MCF 10A (cell line): ENCODE measurements at regions of chr5 and their contacts with region 1.

Region 1: DNA sequence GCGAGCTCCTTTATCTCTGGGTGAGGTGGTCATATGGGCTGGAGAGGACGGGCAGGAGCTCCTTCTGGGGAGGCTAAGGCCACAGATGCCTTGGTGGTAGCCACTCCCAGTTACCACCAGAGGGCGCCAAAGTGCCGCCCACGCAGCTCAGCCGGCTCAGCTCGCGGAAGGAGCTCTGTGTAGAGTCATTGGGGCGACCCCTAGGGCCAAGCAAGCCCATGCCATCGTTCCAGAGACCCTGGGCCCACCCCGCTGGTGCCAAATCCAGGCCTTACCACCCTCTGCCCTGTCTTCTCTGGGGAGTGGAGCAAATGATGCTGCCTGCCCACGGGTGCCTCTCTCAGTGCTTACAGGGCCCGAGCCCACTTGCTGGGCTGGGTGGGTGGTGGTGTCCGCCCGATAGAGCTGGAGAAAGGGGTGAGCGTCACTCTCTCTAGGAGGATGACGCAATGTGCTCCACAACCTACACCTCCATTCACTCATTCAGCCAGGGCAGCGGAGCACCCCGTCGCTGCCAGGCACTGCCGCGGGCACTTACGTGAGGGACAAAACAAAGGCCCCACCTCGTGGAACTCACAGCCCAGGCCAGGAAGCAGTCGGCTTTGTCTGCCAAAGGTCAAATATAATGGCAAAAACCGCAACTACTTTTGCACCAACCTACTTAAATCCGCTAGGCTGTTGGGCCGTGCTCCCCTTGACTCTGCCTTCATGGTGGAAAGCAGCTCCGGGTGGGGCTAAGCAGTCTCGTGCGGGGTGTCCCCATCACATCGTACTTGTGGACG is 13.8 kb downstream of the TSPAN17 start:
- DNase-seq: peak; percentile 81
- H3K4me3 Mint-ChIP-seq: no peak overlapping the region
- H3K27ac Mint-ChIP-seq: no peak overlapping the region
- H3K4me1 Mint-ChIP-seq: no peaks in the 10 kb centered on the region
- H3K27me3 Mint-ChIP-seq: peaks cover 17% of the 10 kb centered on the region
- CTCF ChIP-seq: peak; percentile 99

Region 2: DNA sequence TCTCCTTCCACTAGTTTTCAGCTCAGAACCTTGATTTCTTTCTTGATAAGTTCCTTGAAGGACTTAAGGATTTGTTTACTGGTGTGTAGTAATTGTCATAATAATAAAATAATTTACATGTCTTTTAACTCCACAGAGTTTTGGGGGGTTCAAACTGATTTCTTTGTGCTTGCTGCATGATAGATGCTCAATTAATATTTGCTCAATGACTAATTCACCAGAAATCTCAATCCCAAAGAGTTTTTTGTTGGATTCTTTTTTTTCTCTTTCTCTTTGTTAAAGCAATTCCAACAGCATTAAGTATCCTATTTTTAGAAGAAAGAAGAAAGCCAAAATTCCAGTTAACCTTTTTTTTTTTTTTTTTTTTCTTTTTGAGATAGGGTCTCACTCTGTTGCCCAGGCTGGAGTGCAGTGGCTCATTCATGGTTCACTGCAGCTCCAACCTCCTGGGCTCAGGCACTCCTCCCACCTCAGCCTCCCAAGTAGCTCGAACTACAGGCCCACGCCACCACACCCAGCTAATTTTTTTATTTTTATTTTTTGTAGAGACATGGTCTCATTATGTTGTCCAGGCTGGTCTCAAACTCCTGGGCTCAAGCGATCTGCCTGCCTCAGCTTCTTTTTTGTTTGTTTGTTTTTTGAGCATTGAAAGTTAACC is 202.0 kb before region 1 on chr5:
- CTCF ChIA-PET with region 1: no interaction called
- POLR2A ChIA-PET with region 1: no interaction called
- intact Hi-C with region 1: no loop called
- DNase-seq: no peak
- H3K4me3 Mint-ChIP-seq: no peak overlapping the region
- H3K27ac Mint-ChIP-seq: no peak overlapping the region
- H3K4me1 Mint-ChIP-seq: peaks cover 24% of the 10 kb centered on the region
- H3K27me3 Mint-ChIP-seq: no peaks in the 10 kb centered on the region
- CTCF ChIP-seq: no peak

Region 3: GRCh38 chr5:176590035-176590717 is 70.9 kb before region 1 on chr5:
- CTCF ChIA-PET with region 1: interaction called, 15 read pairs
- POLR2A ChIA-PET with region 1: interaction called, 4 read pairs
- intact Hi-C with region 1: no loop called
- DNase-seq: peak; percentile 43
- H3K4me3 Mint-ChIP-seq: no peak overlapping the region
- H3K27ac Mint-ChIP-seq: no peak overlapping the region
- H3K4me1 Mint-ChIP-seq: no peaks in the 10 kb centered on the region
- H3K27me3 Mint-ChIP-seq: no peaks in the 10 kb centered on the region
- CTCF ChIP-seq: no peak

Region 4: GRCh38 chr5:176675675-176676360 is 14.8 kb after region 1 on chr5:
- CTCF ChIA-PET with region 1: interaction called, 49 read pairs
- POLR2A ChIA-PET with region 1: no interaction called
- intact Hi-C with region 1: no loop called
- DNase-seq: peak; percentile 42
- H3K4me3 Mint-ChIP-seq: no peak overlapping the region
- H3K27ac Mint-ChIP-seq: no peak overlapping the region
- H3K4me1 Mint-ChIP-seq: no peaks in the 10 kb centered on the region
- H3K27me3 Mint-ChIP-seq: peaks cover 5% of the 10 kb centered on the region
- CTCF ChIP-seq: peak; percentile 47

Region 5: DNA sequence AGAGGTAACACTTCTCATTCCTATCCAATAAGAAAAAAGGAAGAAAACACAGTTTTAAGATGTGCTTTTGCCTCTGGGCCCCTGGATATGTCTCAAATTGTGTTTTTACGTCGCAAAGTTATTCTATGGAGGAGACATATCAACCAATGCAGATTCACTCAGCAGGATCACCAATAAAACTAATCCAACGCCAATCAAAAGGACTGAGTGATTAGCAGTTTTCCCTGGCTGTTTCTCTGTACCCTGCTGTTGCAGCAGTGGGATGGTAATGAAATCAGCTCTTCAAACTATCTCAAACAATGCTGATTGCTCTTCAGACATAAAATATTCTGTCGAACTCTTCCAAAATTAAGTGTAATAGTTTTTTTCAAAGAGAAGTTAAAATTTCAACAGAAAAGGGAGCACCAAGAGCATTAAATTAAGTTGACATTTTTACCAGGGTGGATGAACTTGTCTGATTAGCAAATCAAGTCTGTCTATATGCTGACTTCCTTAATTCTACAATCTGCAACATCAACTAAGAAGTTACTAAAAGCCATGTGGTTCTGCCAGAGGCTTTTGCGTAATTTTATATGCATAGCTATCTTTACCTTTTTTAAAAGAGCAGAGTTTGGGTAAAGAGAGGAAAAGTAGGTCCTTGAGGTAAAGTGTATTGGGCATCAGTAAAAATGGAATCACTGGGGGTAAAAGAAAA is 247.8 kb after region 1 on chr5:
- CTCF ChIA-PET with region 1: interaction called, 36 read pairs
- POLR2A ChIA-PET with region 1: interaction called, 4 read pairs
- intact Hi-C with region 1: no loop called
- DNase-seq: no peak
- H3K4me3 Mint-ChIP-seq: no peak overlapping the region
- H3K27ac Mint-ChIP-seq: no peak overlapping the region
- H3K4me1 Mint-ChIP-seq: no peaks in the 10 kb centered on the region
- H3K27me3 Mint-ChIP-seq: no peaks in the 10 kb centered on the region
- CTCF ChIP-seq: no peak

Region 6: GRCh38 chr5:176934309-176934930 is 273.4 kb after region 1 on chr5:
- CTCF ChIA-PET with region 1: interaction called, 33 read pairs
- POLR2A ChIA-PET with region 1: no interaction called
- intact Hi-C with region 1: no loop called
- DNase-seq: no peak
- H3K4me3 Mint-ChIP-seq: no peak overlapping the region
- H3K27ac Mint-ChIP-seq: no peak overlapping the region
- H3K4me1 Mint-ChIP-seq: no peaks in the 10 kb centered on the region
- H3K27me3 Mint-ChIP-seq: no peaks in the 10 kb centered on the region
- CTCF ChIP-seq: no peak

Region 7: GRCh38 chr5:177071666-177072385 is 410.8 kb after region 1 on chr5:
- CTCF ChIA-PET with region 1: interaction called, 26 read pairs
- POLR2A ChIA-PET with region 1: no interaction called
- intact Hi-C with region 1: loop called (anchors 1 kb)
- DNase-seq: peak; percentile 93
- H3K4me3 Mint-ChIP-seq: no peak overlapping the region
- H3K27ac Mint-ChIP-seq: no peak overlapping the region
- H3K4me1 Mint-ChIP-seq: peaks cover 6% of the 10 kb centered on the region
- H3K27me3 Mint-ChIP-seq: no peaks in the 10 kb centered on the region
- CTCF ChIP-seq: peak; percentile 88